Thyroid gland (tissue), 4 donors: ENCODE measurements at regions of chr9 and their contacts with region 1.

Region 1: GRCh38 chr9:110217656-110218099 is 9.7 kb upstream of the C9orf152 start:
- DNase-seq: peak in 1 of 2 donors; percentile 9
- H3K4me3 ChIP-seq: no peak overlapping the region
- H3K27ac ChIP-seq: no peak overlapping the region
- H3K4me1 ChIP-seq: no peaks in the 10 kb centered on the region
- H3K27me3 ChIP-seq: no peaks in the 10 kb centered on the region
- CTCF ChIP-seq: peak; percentile 51 to 72 (median 64)
- POLR2A ChIP-seq: no peak

Region 2: GRCh38 chr9:110183208-110184145 is 34.2 kb before region 1 on chr9:
- intact Hi-C with region 1: loop called (anchors 5 kb)
- DNase-seq: peak; percentile 62 to 74
- H3K4me3 ChIP-seq: no peak overlapping the region
- H3K27ac ChIP-seq: no peak overlapping the region
- H3K4me1 ChIP-seq: no peaks in the 10 kb centered on the region
- H3K27me3 ChIP-seq: no peaks in the 10 kb centered on the region
- CTCF ChIP-seq: peak; percentile 46 to 79 (median 73)
- POLR2A ChIP-seq: no peak

Region 3: DNA sequence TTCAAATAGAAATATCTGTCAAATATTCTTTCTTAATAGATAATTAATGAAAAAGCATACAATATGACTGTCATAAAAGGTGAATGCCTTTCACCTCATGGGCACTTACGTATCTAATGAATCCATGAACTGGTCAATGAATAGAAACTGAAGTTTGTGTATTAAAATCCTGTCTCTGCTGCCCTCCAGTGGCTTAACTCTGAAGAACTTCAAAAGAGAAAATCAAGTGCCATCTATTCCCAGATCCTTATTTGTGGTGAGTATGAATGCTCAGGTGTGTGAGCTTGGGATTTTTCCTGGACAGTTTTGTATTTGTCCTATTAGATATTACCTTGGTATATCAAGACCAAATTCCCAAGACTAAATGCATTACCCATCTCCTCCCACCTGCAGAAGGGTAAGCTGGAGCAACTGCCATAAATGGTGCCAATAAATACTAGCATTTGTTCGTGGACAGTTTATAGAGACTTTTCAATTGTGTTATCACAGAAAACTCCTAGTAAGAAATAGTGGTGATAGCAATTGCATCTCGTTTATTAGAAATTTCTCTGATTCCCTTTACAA is 405.9 kb after region 1 on chr9:
- intact Hi-C with region 1: no loop called
- DNase-seq: peak; percentile 12 to 17
- H3K4me3 ChIP-seq: no peak overlapping the region
- H3K27ac ChIP-seq: no peak overlapping the region
- H3K4me1 ChIP-seq: peaks cover 0 to 6% of the 10 kb centered on the region in 2 donors
- H3K27me3 ChIP-seq: no peaks in the 10 kb centered on the region
- CTCF ChIP-seq: peak; percentile 46 to 78 (median 60)
- POLR2A ChIP-seq: no peak